CD4-positive, alpha-beta memory T cell (primary cell): ENCODE measurements at regions of chr3 and their contacts with region 1.

Region 1: DNA sequence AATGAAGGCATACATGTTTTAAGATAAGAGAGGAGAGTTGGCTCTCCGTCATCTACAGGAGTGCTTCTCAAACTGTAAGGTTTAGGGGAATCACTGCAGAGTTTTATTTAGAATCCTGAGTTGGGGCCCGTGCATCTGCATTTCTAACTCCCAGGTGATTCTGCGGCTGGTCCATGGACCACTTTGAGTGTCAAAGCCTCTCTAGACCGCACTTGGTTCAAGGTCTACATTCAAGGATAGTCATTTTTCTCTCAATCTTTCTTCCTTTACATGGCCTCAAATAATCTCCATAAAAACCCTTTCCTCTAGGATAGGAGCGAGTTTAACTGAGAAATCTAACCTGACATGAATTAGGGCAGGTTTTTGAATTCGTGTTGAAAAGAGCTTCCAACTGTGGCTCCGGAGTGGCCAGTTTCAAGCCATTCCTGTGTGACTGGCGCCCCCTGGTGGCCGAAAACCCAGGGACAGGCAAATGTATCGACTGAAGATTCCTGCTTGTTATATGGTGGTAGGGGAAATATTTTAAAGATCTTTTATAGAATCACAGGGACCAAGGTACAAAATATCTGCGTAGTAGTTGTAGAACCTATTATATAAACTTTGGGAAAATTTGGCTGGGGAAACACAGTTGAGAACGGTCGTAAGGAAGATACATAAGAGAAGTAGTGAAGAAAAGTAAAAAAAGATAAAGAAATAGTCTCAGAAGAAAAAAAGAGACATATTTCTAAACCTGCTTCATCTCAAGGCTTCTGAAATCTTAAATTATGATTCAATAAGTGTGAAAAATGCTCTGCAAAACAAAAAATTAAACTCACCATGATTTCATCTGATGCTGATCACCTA is 11.9 kb downstream of the GABRR3 start:
- DNase-seq: peak; percentile 77 to 84 (median 81)
- H3K4me3 ChIP-seq: no peak overlapping the region
- H3K4me3 Mint-ChIP-seq: no peak overlapping the region
- H3K27ac ChIP-seq: no peak overlapping the region
- H3K27ac Mint-ChIP-seq: peak overlapping the region in 6 of 7 donors; percentile 6 to 72 (median 36)
- H3K4me1 ChIP-seq: peaks cover 1% of the 10 kb centered on the region
- H3K4me1 Mint-ChIP-seq: peaks cover under 1 to 5% (median 5%) of the 10 kb centered on the region in 4 donors
- H3K27me3 ChIP-seq: no peaks in the 10 kb centered on the region
- H3K27me3 Mint-ChIP-seq: no peaks in the 10 kb centered on the region

Region 2: GRCh38 chr3:96863129-96863740 is 1160.0 kb before region 1 on chr3:
- CTCF ChIA-PET with region 1: no interaction called
- POLR2A ChIA-PET with region 1: no interaction called
- intact Hi-C with region 1: loop called (anchors 2 kb)
- DNase-seq: no peak
- H3K4me3 ChIP-seq: no peak overlapping the region
- H3K4me3 Mint-ChIP-seq: no peak overlapping the region
- H3K27ac ChIP-seq: no peak overlapping the region
- H3K27ac Mint-ChIP-seq: no peak overlapping the region
- H3K4me1 ChIP-seq: no peaks in the 10 kb centered on the region
- H3K4me1 Mint-ChIP-seq: no peaks in the 10 kb centered on the region
- H3K27me3 ChIP-seq: no peaks in the 10 kb centered on the region
- H3K27me3 Mint-ChIP-seq: no peaks in the 10 kb centered on the region

Region 3: GRCh38 chr3:97793420-97794019 is 229.7 kb before region 1 on chr3:
- CTCF ChIA-PET with region 1: interaction called, 174 read pairs
- POLR2A ChIA-PET with region 1: no interaction called
- intact Hi-C with region 1: loop called (anchors 1 kb)
- DNase-seq: peak; percentile 41 to 66 (median 61)
- H3K4me3 ChIP-seq: no peak overlapping the region
- H3K4me3 Mint-ChIP-seq: no peak overlapping the region
- H3K27ac ChIP-seq: no peak overlapping the region
- H3K27ac Mint-ChIP-seq: no peak overlapping the region
- H3K4me1 ChIP-seq: no peaks in the 10 kb centered on the region
- H3K4me1 Mint-ChIP-seq: no peaks in the 10 kb centered on the region
- H3K27me3 ChIP-seq: no peaks in the 10 kb centered on the region
- H3K27me3 Mint-ChIP-seq: no peaks in the 10 kb centered on the region

Region 4: GRCh38 chr3:97940034-97940433 is 83.2 kb before region 1 on chr3:
- CTCF ChIA-PET with region 1: interaction called, 22 read pairs
- POLR2A ChIA-PET with region 1: no interaction called
- intact Hi-C with region 1: loop called (anchors 1 kb)
- DNase-seq: peak in 4 of 5 donors; percentile 28 to 33 (median 32)
- H3K4me3 ChIP-seq: no peak overlapping the region
- H3K4me3 Mint-ChIP-seq: no peak overlapping the region
- H3K27ac ChIP-seq: no peak overlapping the region
- H3K27ac Mint-ChIP-seq: peak overlapping the region in 3 of 7 donors; percentile 38 to 65 (median 39)
- H3K4me1 ChIP-seq: no peaks in the 10 kb centered on the region
- H3K4me1 Mint-ChIP-seq: peaks cover 0 to 4% (median 2%) of the 10 kb centered on the region in 4 donors
- H3K27me3 ChIP-seq: no peaks in the 10 kb centered on the region
- H3K27me3 Mint-ChIP-seq: no peaks in the 10 kb centered on the region

Region 5: DNA sequence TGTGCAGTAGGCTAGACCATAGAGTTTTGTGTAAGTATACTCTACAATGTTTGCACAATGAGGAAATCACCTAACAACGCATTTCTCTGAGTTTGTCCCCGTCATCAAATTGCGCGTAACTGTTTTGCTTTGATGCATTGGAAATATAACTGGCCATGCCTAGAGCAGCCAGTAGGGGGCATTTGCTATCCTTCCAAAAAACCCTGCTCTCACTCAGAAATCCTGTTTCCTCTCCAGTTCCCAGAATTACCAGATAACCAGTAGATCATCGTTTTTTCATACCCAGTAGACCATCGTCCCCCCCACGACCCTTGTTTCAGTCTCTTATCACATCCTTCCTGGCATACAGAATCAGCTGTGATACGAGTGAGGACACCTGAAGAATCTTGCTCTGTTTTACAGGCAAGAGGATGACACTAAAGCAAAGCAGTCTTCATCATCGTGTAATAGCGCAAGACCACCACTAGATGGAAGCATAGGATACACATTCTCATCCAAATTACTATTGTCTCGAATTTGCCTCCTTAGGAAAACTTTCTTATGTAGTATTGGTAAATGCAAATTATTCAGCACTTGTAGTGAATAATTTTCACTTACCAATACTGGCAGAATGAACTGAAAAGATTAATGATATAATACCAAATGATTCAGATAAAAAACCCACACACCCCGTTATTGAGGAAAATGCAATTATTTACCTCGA is 16.3 kb after region 1 on chr3:
- CTCF ChIA-PET with region 1: interaction called, 82 read pairs
- POLR2A ChIA-PET with region 1: no interaction called
- intact Hi-C with region 1: no loop called
- DNase-seq: peak; percentile 84 to 90 (median 89)
- H3K4me3 ChIP-seq: peak overlapping the region; percentile 57 to 58
- H3K4me3 Mint-ChIP-seq: peak overlapping the region; percentile 85 to 96 (median 88)
- H3K27ac ChIP-seq: peak overlapping the region; percentile 68
- H3K27ac Mint-ChIP-seq: peak overlapping the region; percentile 82 to 98 (median 96)
- H3K4me1 ChIP-seq: no peaks in the 10 kb centered on the region
- H3K4me1 Mint-ChIP-seq: peaks cover 2 to 8% (median 5%) of the 10 kb centered on the region in 4 donors
- H3K27me3 ChIP-seq: peaks cover 3% of the 10 kb centered on the region
- H3K27me3 Mint-ChIP-seq: peaks cover 7 to 10% of the 10 kb centered on the region in 2 donors

Region 6: DNA sequence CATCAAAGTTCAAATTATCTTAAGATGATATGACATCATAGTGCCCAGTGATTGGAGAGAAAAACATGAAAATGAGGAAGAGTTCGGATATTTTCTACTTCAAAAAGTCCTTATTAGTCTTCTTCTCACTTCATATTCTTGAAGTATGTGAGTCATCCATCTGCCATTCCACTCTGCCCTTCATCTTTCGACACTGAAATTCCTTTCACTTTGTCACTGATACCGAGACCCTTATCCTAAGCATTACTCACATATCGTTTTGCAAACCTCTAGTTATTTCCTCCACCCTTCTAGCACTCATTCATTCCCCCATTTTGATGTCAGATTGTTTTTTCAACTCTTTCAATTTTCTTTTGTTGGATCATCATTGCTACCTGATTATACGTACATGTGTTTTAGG is 128.0 kb after region 1 on chr3:
- CTCF ChIA-PET with region 1: no interaction called
- POLR2A ChIA-PET with region 1: no interaction called
- intact Hi-C with region 1: no loop called
- DNase-seq: no peak
- H3K4me3 ChIP-seq: no peak overlapping the region
- H3K4me3 Mint-ChIP-seq: no peak overlapping the region
- H3K27ac ChIP-seq: no peak overlapping the region
- H3K27ac Mint-ChIP-seq: no peak overlapping the region
- H3K4me1 ChIP-seq: no peaks in the 10 kb centered on the region
- H3K4me1 Mint-ChIP-seq: no peaks in the 10 kb centered on the region
- H3K27me3 ChIP-seq: no peaks in the 10 kb centered on the region
- H3K27me3 Mint-ChIP-seq: peaks cover 0 to 6% of the 10 kb centered on the region in 2 donors